HEK293T (cell line): ENCODE measurements at regions of chr5 and their contacts with region 1.

Region 1: DNA sequence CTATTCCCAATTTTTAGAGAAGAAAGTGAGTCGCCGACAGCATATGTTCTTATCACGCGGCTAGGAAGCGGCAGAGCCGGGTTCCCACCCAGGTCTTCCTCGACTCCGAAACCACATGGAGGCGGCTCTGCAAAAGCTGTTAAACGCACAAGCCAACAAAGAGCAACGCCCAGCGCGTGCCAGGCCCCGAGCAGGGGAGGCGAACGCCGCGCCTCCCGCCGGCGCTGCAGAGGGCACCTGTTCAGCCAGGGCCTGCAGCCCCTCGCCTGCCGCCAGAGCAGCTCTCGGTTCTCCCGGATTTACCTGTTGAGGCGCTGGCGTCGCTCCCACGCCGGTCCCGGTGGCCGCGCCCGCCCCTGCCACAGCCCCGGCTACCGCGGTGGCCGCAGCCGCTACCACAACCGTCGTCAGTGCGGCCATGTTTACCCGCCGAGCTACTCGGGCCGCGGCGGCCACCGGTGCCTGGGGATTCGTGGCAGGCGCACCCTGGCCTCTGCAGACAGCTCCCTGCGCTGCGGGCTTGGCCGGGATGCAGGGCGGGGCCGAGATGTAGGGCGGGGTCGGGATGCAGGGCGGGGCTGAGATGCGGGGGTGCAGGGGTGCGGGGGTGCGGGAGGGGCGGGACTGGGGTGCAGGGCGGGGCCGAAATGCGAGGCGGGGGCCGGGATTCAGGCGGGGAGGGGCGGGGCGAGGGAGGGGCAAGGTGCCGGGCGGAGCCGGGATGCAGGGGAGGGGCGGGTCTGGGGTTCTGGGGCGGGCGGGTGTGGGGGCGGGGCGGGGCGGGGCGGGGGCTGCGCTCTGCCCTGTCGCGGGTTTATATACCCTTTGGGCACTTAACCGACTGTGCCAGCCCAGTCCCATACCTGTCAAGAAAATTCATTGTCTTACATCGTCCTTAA is at the start of gene CCDC112:
- DNase-seq: peak; percentile 86

Region 2: DNA sequence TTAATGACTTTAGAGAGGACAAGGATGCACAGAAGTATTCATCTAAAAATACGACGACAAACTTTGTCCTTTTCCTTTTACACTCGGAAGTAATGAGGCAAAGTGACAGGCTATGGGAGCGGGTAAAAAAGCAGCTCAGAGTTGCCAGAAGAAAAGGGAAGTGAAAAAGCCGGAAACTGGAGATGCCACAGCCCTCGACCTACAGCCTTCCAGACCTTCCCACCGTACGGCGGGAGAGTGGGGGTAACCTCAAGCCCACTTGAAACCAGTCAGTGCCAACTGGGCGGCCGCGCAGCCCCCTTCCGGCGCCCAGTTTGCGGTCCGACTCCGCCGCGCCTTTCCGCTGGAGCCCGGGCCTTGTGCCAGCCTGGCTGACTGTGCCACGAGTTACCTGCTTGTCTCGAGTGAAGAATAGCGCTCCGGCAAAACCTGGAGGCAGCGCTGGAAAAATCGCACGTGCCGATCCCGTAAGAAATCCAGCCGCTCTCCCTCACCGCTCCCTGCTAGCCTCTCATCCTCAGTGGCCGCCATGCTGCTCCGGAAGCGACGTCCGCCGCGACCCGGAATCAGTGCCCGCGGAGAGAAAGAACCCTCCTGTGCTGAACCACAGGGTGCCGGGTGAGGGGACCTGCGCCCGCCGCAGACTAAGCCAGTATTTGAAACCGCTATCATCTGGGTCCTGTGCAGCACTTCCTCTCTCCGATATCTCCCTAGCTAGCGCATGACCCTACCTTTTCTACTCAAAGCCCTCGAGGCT is 33.9 kb before region 1 on chr5 and contains the start of gene PGGT1B:
- CTCF ChIA-PET with region 1: no interaction called
- POLR2A ChIA-PET with region 1: interaction called, 12 read pairs
- DNase-seq: peak; percentile 75

Region 3: DNA sequence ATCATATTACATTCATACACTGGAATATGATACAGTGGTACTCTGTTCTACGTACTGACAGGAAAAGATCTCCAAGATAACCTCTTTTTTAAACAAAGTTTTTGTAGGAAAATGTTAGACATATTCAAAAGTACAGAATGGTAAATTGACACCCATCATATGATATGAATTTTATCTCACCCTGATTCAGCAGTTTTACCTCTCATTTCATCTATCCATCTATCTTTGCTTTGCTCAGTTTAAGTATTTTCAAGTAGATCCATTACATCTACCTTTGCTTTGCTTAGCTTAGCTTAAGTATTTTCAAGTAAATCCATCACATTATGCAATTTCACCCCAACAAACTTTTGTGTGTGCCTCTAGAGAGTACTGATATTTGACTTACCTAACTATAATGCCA is 14.2 kb before region 1 on chr5:
- CTCF ChIA-PET with region 1: no interaction called
- POLR2A ChIA-PET with region 1: no interaction called
- DNase-seq: no peak